ENCODE measurements at regions of chr6 and their contacts with region 1.

Region 1: DNA sequence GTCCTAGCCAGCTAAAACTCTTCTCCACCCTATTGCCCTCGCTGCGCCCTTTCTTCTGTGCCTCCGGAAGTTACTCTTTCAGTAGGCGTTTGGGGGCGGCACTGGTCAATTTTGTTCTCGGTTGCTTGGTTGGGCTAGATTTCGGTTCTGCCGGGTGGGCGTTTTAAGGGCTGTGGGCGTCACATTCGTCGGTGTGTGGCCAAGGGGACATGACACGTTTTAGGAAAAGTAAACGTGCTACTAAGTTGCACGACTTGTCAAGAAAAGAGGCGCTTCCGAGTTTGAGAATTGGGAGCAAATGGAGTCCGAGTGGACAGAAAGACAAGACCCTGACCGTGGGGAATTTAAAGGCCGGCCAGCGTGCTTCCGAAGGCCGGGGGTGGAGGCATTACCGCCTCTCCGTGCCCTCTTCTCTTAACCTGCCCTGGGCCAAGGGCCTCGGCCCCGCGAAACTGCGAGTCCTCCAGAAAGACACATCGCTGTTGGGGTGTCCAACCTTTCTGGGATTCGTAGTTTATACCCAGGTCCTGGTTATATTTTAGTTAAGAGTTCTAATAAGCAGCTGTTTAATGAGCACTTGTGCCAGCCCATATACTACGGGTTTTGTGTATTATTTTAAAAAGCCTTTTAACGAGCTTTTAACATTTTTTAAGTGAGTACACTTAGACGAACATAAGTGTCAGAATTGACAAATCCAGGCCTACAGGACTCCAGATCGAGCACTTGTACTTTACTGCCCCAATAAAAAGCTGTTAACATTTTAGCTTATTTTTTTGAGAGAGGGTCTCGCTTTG is 661 bp upstream of the BAG6 start:
- DNase-seq: peak; percentile 94 to 98 (median 97)
- H3K4me3 ChIP-seq: peak overlapping the region; percentile 66 to 97 (median 93)
- H3K27ac ChIP-seq: peak overlapping the region; percentile 97 to 98
- H3K4me1 ChIP-seq: peaks cover 0 to 33% (median 23%) of the 10 kb centered on the region in 4 experiments
- H3K27me3 ChIP-seq: no peaks in the 10 kb centered on the region

Region 2: DNA sequence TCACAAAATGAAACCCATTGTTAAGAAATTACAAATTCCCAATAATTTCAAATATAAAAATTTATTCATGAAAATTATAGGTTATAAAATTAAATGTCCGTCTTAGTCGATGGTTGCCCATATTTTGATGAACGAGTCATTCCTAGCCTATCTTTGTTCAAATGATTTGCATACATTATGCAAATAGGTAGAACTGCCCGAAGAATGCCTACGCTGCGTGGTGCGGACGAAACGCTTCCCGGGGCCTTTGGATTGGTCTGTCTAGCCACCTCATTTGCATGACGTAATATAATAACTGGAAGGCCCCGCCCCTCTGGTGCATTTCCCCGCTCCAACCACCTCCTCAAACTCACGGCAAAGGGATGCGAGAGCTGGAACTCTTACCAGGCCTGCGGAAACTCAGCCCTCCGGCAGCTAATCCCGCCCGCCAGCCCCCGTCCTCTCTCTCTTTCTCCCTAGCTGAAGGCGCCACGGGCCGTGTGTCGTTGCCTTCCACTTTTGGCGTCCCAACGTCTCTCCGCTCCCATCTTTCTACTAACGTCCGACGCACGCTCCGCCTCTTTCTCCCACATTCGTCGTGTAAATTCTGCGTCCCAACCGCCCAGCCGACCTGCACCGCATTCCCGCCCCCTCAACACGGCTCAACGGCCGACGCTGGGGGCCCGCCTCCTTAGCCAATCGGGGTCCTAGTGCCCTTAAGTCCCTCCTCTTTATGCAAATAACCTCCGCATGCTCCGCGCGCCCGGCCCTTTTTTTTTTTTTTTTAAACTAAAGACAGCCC is 33.1 kb before region 1 on chr6:
- CTCF ChIA-PET with region 1: interaction called, 12 read pairs
- POLR2A ChIA-PET with region 1: interaction called, 19 read pairs
- DNase-seq: peak; percentile 99 to 100 (median 99)
- H3K4me3 ChIP-seq: peak overlapping the region; percentile 29 to 95 (median 78)
- H3K27ac ChIP-seq: peak overlapping the region; percentile 94 to 97
- H3K4me1 ChIP-seq: peaks cover 25 to 54% (median 47%) of the 10 kb centered on the region in 4 experiments
- H3K27me3 ChIP-seq: no peaks in the 10 kb centered on the region

Region 3: DNA sequence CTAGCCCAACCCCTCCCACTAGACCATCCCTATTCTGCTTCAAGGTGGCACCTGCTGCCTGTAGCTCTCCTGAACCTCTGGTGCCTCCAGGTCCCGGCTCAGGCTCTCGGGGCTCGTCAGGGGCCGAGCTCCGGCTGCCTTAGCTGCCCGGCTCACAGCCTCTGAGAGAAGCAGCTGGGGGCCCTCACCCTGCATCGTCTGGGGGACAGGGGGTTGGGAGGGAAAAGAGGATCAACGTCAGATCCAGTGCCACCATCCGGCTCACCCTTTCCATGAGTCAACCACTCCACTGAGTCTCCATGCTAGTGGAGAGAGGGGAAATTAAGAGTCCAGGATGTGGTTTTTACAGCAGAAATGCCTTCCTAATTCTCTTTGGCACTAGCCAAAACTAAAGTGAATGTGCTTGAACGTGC is 13.7 kb before region 1 on chr6:
- CTCF ChIA-PET with region 1: interaction called, 10 read pairs
- POLR2A ChIA-PET with region 1: interaction called, 7 read pairs
- DNase-seq: peak in 2 of 3 donors; percentile 46 to 52
- H3K4me3 ChIP-seq: no peak overlapping the region
- H3K27ac ChIP-seq: peak overlapping the region in 1 of 2 experiments; percentile 19
- H3K4me1 ChIP-seq: peaks cover 0 to 11% (median 3%) of the 10 kb centered on the region in 4 experiments
- H3K27me3 ChIP-seq: no peaks in the 10 kb centered on the region

Region 4: GRCh38 chr6:31665501-31666336 is 12.6 kb after region 1 on chr6 and contains the start of gene CSNK2B:
- CTCF ChIA-PET with region 1: interaction called, 40 read pairs
- POLR2A ChIA-PET with region 1: interaction called, 31 read pairs
- DNase-seq: peak; percentile 98
- H3K4me3 ChIP-seq: peak within 1 kb of the TSS; percentile 79 to 99 (median 91)
- H3K27ac ChIP-seq: peak within 1 kb of the TSS; percentile 96 to 99
- H3K4me1 ChIP-seq: peaks cover 11 to 57% (median 40%) of the 10 kb centered on the region in 4 experiments
- H3K27me3 ChIP-seq: no peaks in the 10 kb centered on the region

Measured in common myeloid progenitor, CD34-positive (primary cell).